GM18951 (cell line): ENCODE measurements at regions of chr2 and their contacts with region 1.

Region 1: GRCh38 chr2:182186132-182186735 is 200.6 kb downstream of the PPP1R1C start:
- POLR2A ChIP-seq: no peak

Region 2: DNA sequence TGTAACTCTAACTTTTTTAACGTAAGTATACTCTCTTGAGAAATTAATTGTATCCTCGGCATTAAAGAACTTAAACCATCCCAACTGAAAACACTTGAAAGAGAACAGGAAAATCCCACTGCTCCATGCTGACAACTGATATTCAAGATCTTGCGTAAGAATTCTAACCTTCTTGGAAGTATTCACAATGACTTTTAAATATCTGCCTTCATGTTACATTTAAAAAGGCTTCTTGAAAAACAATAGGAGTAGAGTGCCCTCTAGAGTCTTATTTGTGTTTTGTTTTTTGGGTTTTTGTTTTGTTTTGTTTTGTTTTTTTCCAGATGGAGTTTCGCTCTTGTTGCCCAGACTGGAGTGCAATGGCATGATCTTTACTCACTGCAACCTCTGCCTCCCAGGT is 464.5 kb after region 1 on chr2:
- in situ Hi-C with region 1: loop called (anchors 5 kb)
- POLR2A ChIP-seq: no peak